IMR-90 (cell line): ENCODE measurements at regions of chr20 and their contacts with region 1.

Region 1: DNA sequence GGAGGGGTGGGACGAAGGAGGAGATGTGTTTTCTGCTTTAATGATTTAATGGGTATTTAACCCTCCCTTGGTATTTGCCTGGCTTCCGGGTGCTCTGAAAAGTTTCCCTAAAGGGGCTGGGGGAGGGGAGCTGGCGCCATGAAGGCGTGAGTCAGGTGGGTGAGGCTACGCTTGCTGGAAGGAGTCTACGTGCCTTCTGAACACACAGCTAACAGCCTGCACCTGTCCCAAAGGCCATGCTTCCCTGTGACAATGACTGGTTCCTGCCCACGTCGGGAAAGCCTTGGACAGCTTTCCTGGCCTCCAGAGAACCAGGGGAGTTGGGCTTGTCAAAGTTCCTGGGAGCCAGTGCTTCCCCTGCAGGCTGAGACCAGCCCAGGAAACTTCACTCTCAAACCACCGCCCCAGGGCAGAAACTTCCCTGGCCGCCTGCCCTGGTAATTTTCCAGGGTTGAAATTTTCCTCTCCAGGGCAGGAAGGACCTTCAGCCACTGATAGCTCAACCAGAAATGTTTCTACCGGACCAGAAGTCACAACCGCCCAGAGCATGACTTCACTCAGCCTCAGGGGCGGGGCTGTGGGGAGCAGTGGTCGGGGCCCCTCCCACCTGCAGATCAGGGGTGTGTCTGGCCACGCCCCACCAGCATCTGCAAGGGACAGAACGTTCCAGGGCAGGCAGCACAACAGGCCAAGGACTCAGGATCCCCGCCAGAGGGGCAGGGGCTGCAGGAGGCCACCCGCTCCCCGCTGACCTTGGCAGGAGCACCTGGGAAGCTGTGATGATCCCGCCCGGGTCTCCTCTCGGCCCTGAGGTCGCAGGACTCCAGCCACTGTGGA is 18.6 kb upstream of the SLCO4A1 start:
- DNase-seq: peak; percentile 68
- ATAC-seq: peak; percentile 93
- H3K4me3 ChIP-seq: no peak overlapping the region
- H3K27ac ChIP-seq: no peak overlapping the region; the same call in 1 of the 2 replicates
- H3K4me1 ChIP-seq: peaks cover 14% of the 10 kb centered on the region
- H3K27me3 ChIP-seq: no peaks in the 10 kb centered on the region; the same call in 1 of the 2 replicates
- CTCF ChIP-seq: no peak
- POLR2A ChIP-seq: no peak
- RAD21 ChIP-seq: no peak

Region 2: DNA sequence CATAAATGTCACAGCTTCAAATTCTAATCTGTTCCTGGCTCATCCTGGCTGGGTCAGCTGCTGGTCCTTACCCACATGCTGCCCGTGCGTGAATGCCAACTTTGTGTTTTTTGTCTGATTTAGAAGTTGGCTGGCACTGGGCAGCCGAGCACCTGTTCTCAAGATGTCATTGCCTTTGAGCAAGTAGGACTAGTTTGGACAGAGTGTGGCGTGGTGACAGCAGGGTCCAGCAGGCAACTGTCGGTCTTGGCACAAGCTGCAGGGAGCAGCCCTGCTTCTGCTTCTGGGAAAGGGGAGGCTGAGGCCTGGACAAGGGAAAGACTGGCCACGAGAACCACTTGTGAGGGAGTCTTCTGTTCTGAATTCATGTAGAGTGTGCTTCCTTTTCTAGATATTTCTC is 347.3 kb before region 1 on chr20:
- CTCF ChIA-PET with region 1: no interaction called
- POLR2A ChIA-PET with region 1: no interaction called
- dilution Hi-C with region 1: no loop called
- in situ Hi-C with region 1: loop called (anchors 25 kb)
- intact Hi-C with region 1: no loop called
- DNase-seq: no peak
- ATAC-seq: no peak
- H3K4me3 ChIP-seq: no peak overlapping the region
- H3K27ac ChIP-seq: no peak overlapping the region
- H3K4me1 ChIP-seq: no peaks in the 10 kb centered on the region
- H3K27me3 ChIP-seq: no peaks in the 10 kb centered on the region
- CTCF ChIP-seq: no peak
- POLR2A ChIP-seq: no peak
- RAD21 ChIP-seq: no peak

Region 3: DNA sequence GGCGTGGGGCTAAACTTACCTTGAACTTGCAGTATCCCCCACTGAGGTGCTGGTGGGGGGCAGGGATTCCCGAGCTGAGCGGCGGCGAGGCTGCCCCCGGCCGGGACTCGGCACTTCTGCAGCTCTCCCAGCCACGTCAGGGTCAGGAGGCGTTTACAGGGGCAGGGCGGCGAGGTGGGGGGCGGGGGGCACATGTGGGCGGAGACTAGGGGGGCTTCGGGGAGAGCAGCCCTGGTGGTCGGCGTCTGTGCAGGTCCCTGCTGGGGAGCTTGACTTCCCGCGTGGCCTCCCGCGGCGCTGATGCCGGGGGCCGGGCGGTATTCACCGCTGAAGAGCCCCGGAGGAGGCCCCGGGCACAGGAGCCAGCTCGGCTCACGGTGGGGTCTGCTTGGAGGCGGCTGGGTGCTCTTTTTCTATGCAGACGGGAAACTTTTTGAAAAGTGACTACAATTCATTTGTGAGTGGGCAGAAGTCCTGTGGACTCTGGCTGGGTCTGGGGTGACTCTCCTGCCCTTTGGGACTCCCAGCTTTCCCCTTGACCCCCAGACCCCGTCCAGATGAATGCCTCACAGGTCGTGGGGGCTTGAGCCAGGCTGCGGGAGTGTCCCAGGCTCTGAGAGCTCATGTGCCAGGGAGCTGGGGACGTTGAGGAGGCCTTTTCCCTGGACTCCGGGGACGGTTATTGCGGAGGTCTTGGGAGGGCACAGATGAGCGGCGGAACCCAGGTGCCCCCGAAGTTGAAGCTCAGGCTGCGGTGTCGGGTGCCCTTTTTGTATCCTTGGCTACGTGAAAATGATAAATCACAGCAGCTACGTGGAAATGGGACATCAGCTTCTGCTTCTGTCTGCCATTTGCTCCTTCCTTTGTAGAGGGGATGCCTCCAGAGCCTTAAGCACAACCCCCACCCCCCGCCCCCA is 72.0 kb before region 1 on chr20:
- CTCF ChIA-PET with region 1: no interaction called
- POLR2A ChIA-PET with region 1: no interaction called
- dilution Hi-C with region 1: no loop called
- in situ Hi-C with region 1: no loop called
- intact Hi-C with region 1: no loop called
- DNase-seq: no peak
- ATAC-seq: no peak
- H3K4me3 ChIP-seq: no peak overlapping the region
- H3K27ac ChIP-seq: no peak overlapping the region
- H3K4me1 ChIP-seq: no peaks in the 10 kb centered on the region
- H3K27me3 ChIP-seq: peaks cover 79% of the 10 kb centered on the region
- CTCF ChIP-seq: no peak
- POLR2A ChIP-seq: no peak
- RAD21 ChIP-seq: no peak

Region 4: DNA sequence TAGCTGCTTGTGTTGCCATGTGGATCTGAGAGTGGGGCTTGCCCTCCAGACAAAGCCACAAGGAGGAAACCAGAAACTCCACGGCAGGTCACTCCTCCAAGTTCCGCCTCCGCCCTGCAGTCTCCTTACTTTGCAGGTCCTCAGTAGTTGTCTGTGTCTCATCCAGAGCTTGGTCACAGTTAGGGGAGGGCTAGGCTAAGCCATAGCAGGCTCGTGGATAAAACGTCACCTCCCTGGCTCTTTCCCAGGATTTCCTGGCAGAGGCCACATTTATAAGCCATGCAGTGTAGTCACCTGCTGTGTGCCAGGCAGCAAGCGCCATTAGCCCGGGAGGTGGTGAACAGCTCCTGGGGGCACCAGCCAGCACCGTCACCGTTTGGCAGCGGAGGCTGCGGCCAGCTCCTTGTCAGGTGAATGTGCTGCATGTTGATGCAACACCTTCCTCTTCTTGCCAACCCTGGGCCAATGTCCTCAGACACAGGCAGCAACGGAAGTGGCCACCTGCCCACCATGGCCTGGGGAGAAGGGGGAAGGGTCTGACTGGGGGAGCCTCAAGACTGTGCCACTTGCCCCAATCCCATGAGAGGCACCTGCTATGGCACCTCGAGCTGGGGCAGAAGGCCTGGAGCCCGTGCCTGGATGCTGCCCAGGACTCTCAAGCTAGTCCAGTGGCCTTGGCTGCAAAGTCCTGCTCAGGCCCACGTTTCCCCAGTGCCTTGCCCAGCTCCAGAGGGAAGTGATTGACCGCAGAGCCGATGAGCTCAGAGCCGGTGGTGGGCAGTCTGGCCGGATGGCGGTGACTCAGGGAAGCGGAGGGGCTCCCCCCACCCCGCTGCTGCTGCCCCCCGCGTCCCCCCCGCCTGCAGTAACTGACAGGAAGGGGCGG is 20.4 kb before region 1 on chr20:
- CTCF ChIA-PET with region 1: no interaction called
- POLR2A ChIA-PET with region 1: no interaction called
- dilution Hi-C with region 1: no loop called
- in situ Hi-C with region 1: no loop called
- intact Hi-C with region 1: no loop called
- DNase-seq: peak; percentile 47
- ATAC-seq: peak; percentile 62
- H3K4me3 ChIP-seq: no peak overlapping the region
- H3K27ac ChIP-seq: no peak overlapping the region
- H3K4me1 ChIP-seq: no peaks in the 10 kb centered on the region
- H3K27me3 ChIP-seq: peaks cover 49% of the 10 kb centered on the region
- CTCF ChIP-seq: no peak
- POLR2A ChIP-seq: no peak
- RAD21 ChIP-seq: no peak